ENCODE measurements at regions of chr17 and their contacts with region 1.

Region 1: GRCh38 chr17:29617125-29617480 is 5.6 kb downstream of the CORO6 start:
- DNase-seq: peak; percentile 81 to 96 (median 88)
- ATAC-seq: peak; percentile 69
- H3K4me3 ChIP-seq: peak overlapping the region; percentile 68
- H3K4me3 Mint-ChIP-seq: peak overlapping the region; percentile 91
- H3K27ac ChIP-seq: no peak overlapping the region
- H3K27ac Mint-ChIP-seq: peak overlapping the region; percentile 78
- H3K4me1 ChIP-seq: peaks cover 67% of the 10 kb centered on the region
- H3K4me1 Mint-ChIP-seq: peaks cover 47% of the 10 kb centered on the region
- H3K27me3 ChIP-seq: no peaks in the 10 kb centered on the region
- H3K27me3 Mint-ChIP-seq: no peaks in the 10 kb centered on the region
- CTCF ChIP-seq: peak; percentile 65

Region 2: GRCh38 chr17:29514792-29515191 is 102.3 kb before region 1 on chr17:
- CTCF ChIA-PET with region 1: no interaction called
- POLR2A ChIA-PET with region 1: no interaction called
- intact Hi-C with region 1: no loop called
- DNase-seq: no peak
- ATAC-seq: no peak
- H3K4me3 ChIP-seq: no peak overlapping the region
- H3K4me3 Mint-ChIP-seq: no peak overlapping the region
- H3K27ac ChIP-seq: no peak overlapping the region
- H3K27ac Mint-ChIP-seq: no peak overlapping the region
- H3K4me1 ChIP-seq: no peaks in the 10 kb centered on the region
- H3K4me1 Mint-ChIP-seq: no peaks in the 10 kb centered on the region
- H3K27me3 ChIP-seq: no peaks in the 10 kb centered on the region
- H3K27me3 Mint-ChIP-seq: no peaks in the 10 kb centered on the region
- CTCF ChIP-seq: no peak

Region 3: DNA sequence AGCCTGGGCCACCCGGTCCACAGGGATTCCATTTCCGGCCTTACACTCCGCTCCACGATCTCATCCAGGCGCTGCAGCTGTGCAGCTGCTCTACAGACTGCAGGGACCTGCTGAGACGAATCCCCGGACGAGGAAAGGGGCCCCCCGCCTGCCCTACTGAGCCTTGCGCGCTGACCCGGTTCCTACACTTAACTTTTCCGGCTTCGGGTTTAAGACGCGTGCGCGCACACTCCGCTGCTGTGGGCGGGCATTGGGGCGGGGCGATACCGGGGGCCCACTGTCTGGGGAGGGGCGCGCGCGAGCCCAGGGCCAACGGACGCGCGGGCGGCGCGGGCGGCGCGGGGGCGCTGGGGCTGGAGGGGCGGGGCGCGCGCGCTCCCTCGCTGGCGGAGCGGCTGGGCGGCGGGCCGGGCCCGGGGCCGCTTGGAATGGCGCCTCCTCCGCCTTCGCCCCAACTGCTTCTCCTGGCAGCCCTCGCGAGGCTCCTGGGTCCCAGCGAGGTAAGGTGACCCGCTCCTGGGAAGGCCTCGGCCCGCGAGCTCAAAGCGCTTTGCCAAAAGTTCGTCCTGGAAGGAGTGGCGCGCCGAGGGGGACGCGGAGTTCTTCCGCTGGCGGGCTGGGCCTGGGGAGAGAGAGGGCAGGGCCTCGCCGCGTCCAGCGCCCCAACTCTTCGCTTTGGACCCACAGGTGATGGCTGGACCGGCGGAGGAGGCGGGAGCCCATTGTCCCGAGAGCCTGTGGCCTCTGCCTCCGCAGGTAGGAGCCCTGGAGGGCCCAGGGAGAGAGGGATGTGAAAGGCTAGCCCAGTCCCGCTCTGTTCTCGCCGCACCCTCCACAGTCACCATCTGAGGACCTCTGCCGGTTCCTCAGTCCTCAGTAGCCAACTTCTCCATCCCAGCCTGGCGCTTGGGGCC is 48.5 kb before region 1 on chr17 and contains the start of gene TP53I13:
- CTCF ChIA-PET with region 1: interaction called, 30 read pairs
- POLR2A ChIA-PET with region 1: interaction called, 37 read pairs
- intact Hi-C with region 1: loop called (anchors 10 kb)
- DNase-seq: peak; percentile 69 to 98 (median 92)
- ATAC-seq: peak; percentile 62
- H3K4me3 ChIP-seq: peak within 1 kb of the TSS; percentile 90
- H3K4me3 Mint-ChIP-seq: peak within 1 kb of the TSS; percentile 96
- H3K27ac ChIP-seq: peak within 1 kb of the TSS; percentile 61 to 70
- H3K27ac Mint-ChIP-seq: peak within 1 kb of the TSS; percentile 82
- H3K4me1 ChIP-seq: peaks cover 58% of the 10 kb centered on the region
- H3K4me1 Mint-ChIP-seq: peaks cover 35% of the 10 kb centered on the region
- H3K27me3 ChIP-seq: no peaks in the 10 kb centered on the region
- H3K27me3 Mint-ChIP-seq: no peaks in the 10 kb centered on the region
- CTCF ChIP-seq: no peak
- total RNA-seq, gene TP53I13: 45.8 to 47.7 TPM

Region 4: GRCh38 chr17:29589524-29590410 is 27.3 kb before region 1 on chr17 and contains the start of gene GIT1:
- CTCF ChIA-PET with region 1: interaction called, 96 read pairs
- POLR2A ChIA-PET with region 1: interaction called, 40 read pairs
- intact Hi-C with region 1: loop called (anchors 1 kb)
- DNase-seq: peak; percentile 65 to 94 (median 81)
- ATAC-seq: peak; percentile 83
- H3K4me3 ChIP-seq: peak within 1 kb of the TSS; percentile 84
- H3K4me3 Mint-ChIP-seq: peak within 1 kb of the TSS; percentile 98
- H3K27ac ChIP-seq: peak within 1 kb of the TSS; percentile 60 to 64
- H3K27ac Mint-ChIP-seq: peak within 1 kb of the TSS; percentile 86
- H3K4me1 ChIP-seq: peaks cover 84% of the 10 kb centered on the region
- H3K4me1 Mint-ChIP-seq: peaks cover 71% of the 10 kb centered on the region
- H3K27me3 ChIP-seq: no peaks in the 10 kb centered on the region
- H3K27me3 Mint-ChIP-seq: no peaks in the 10 kb centered on the region
- CTCF ChIP-seq: no peak
- total RNA-seq, gene GIT1: 35.8 to 36.7 TPM

Region 5: DNA sequence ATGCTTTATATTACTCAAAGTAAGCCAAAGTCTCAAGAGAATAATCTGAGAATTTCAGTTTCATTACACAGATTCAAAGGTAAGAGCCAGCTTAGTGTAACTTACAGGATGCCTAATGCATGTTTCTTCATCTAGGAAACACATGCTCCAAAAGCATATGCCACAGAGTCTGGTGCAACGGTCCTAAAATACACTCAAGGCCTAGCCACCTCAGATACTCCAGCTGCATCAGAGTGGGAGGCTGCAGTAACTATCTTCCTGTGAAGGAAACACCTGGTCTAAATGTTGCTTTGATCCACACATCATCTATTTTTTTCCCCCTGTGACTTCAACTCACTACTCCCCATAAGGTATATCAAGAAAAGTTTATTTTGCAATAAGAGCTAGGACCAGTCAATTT is 57.2 kb after region 1 on chr17:
- CTCF ChIA-PET with region 1: interaction called, 11 read pairs
- POLR2A ChIA-PET with region 1: interaction called, 3 read pairs
- intact Hi-C with region 1: no loop called
- DNase-seq: peak in 3 of 14 experiments; percentile 5 to 20 (median 14)
- ATAC-seq: peak; percentile 43
- H3K4me3 ChIP-seq: no peak overlapping the region
- H3K4me3 Mint-ChIP-seq: no peak overlapping the region
- H3K27ac ChIP-seq: no peak overlapping the region
- H3K27ac Mint-ChIP-seq: peak overlapping the region; percentile 73
- H3K4me1 ChIP-seq: no peaks in the 10 kb centered on the region
- H3K4me1 Mint-ChIP-seq: peaks cover 28% of the 10 kb centered on the region
- H3K27me3 ChIP-seq: no peaks in the 10 kb centered on the region
- H3K27me3 Mint-ChIP-seq: no peaks in the 10 kb centered on the region
- CTCF ChIP-seq: no peak

Region 6: DNA sequence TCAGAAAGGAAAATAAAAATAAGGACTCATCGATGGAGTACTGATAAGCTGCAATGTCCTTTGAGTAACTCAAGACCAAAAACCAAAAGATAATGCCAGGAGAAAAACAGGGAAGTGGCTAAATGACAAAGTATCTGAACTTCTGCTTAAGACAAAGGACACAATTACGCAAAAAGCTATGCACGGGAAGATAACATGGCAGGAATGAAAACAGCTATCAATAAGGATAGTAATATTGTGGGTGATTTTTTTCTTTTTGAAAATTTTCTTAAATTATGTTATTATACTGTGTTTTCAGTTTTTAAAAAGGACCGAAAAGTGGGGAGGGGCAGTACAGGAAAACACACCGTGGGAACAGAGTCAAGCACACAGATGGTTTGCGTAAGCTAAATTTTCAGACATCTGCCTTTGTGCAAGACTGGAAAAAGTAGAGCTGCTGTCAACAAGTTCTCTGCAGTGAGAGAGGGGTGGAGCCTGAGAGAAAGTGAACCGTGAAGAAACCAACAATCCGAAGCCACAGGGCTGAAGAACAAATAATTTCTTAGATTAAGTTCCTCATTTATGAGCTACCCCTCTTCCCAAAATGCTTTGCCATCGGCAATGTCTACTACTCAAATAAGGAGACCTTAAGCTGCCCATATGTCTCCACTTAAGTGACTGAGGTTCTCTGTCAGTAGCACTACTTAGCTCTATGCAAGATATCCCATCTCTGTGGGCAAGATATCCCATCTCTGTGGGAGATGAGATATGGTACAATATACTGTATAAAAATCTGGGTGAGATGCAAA is 105.5 kb after region 1 on chr17:
- CTCF ChIA-PET with region 1: interaction called, 3 read pairs
- POLR2A ChIA-PET with region 1: interaction called, 17 read pairs
- intact Hi-C with region 1: no loop called
- DNase-seq: peak; percentile 15 to 82 (median 43)
- ATAC-seq: peak; percentile 76
- H3K4me3 ChIP-seq: peak overlapping the region; percentile 30
- H3K4me3 Mint-ChIP-seq: peak overlapping the region; percentile 82
- H3K27ac ChIP-seq: peak overlapping the region; percentile 73 to 79
- H3K27ac Mint-ChIP-seq: peak overlapping the region; percentile 87
- H3K4me1 ChIP-seq: peaks cover 53% of the 10 kb centered on the region
- H3K4me1 Mint-ChIP-seq: peaks cover 85% of the 10 kb centered on the region
- H3K27me3 ChIP-seq: no peaks in the 10 kb centered on the region
- H3K27me3 Mint-ChIP-seq: no peaks in the 10 kb centered on the region
- CTCF ChIP-seq: no peak

Measured in CD4-positive, alpha-beta T cell (primary cell).